Dorsolateral prefrontal cortex (tissue), 120 donors: ENCODE measurements at regions of chr2 and their contacts with region 1.

Region 1: GRCh38 chr2:231514103-231514950 is 15.9 kb downstream of the NMUR1 start:
- DNase-seq: peak; percentile 97 to 99 (median 98)
- H3K4me3 ChIP-seq: peak overlapping the region; percentile 55 to 98 (median 85)
- H3K27ac ChIP-seq: peak overlapping the region; percentile 63 to 97 (median 92)
- H3K27me3 ChIP-seq: no peaks in the 10 kb centered on the region
- CTCF ChIP-seq: peak in 23 of 56 donors; percentile 4 to 47 (median 31)

Region 2: GRCh38 chr2:231323316-231323715 is 191.0 kb before region 1 on chr2:
- intact Hi-C with region 1: no loop called
- DNase-seq: no peak
- H3K4me3 ChIP-seq: no peak overlapping the region
- H3K27ac ChIP-seq: no peak overlapping the region
- H3K27me3 ChIP-seq: no peaks in the 10 kb centered on the region
- CTCF ChIP-seq: no peak

Region 3: DNA sequence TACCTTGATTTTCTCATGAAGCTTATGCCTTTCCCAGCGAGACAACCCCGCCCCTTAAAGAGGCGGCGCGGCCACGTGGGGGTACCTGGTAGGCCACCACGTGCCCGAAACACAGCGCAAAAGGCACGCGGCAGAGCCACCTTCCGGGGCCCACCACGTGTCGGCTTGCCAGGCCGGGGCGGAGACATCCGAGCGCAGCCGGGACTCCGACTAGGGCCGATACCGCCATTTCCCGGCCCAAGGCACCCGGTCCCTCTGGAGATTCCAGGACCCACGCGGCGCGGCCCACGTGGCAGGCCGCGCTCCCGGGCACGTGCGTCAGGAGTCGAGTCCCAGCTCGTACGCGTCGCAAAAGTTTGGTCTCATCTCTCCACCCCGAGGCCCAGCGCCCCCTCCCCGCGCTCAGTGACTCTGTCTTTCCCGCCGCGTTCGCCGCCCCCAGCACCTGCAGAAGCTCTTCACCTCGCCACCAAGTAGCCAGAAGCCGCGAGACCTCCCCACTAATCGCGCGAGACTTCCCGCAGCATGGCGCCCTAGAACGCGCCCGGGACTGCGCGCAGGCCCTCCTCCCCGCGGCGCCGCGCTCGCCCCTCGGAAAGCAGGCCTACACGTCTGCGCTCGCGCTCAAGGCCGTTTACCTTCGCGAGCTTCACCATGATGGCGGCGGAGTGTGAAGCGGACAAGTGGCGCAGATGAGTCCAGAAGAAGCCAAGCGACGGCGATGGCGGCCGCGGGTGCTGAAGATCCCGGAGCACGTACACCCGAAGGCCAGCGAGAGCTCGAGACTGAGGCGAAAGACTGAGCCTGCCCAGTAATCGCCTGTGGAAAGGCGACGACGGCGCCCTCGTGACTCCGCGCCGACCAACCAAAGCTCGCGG is 50.4 kb before region 1 on chr2 and contains the start of gene NCL:
- intact Hi-C with region 1: loop called (anchors 2 kb)
- DNase-seq: peak in 5 of 10 donors; percentile 36 to 65 (median 46)
- H3K4me3 ChIP-seq: peak within 1 kb of the TSS; percentile 76 to 100 (median 94)
- H3K27ac ChIP-seq: peak within 1 kb of the TSS; percentile 70 to 99 (median 92)
- H3K27me3 ChIP-seq: no peaks in the 10 kb centered on the region
- CTCF ChIP-seq: peak in 16 of 56 donors; percentile 3 to 25 (median 8)
- total RNA-seq, gene NCL: 239 to 396 (median 335) TPM

Region 4: DNA sequence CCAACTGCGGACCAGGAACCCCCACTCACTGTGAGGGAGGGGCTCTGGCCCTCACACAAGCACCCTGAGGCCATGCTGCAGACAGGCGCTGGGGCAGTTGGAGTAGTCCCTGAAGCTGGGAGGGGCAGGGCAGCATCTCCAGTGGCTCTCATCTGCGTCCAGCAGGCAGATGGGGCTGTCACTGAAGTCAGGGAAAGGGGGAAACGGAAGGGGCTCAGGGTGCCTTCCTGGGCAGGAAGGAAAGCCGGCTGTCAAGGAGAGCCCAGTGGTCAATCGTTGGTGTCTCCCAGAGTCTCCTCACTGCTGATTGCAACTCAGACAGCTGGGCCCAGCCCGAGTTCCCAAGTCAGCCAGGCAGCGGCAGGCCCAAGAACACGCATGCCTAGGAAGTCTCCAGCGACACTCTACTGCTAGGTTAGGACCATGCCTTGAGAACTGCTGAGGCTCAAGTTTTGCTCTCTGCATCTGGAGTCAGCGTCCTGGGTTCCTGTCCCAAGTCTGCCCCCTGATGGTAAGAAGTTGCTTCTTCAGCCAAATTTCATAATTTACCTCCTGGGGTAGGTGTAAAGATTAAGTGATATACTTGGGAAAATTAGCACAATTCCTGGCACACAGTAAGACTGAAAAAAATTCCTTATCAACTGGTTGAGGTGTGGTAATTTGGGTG is 43.4 kb after region 1 on chr2:
- intact Hi-C with region 1: loop called (anchors 1 to 5 kb)
- DNase-seq: peak in 9 of 10 donors; percentile 27 to 60 (median 48)
- H3K4me3 ChIP-seq: peak overlapping the region in 1 of 59 donors; percentile 3
- H3K27ac ChIP-seq: peak overlapping the region in 3 of 59 donors; percentile 11 to 27 (median 17)
- H3K27me3 ChIP-seq: no peaks in the 10 kb centered on the region
- CTCF ChIP-seq: peak; percentile 61 to 90 (median 76)

Region 5: GRCh38 chr2:231563378-231563961 is 49.1 kb after region 1 on chr2:
- intact Hi-C with region 1: loop called (anchors 2 to 5 kb)
- DNase-seq: peak; percentile 41 to 79 (median 70)
- H3K4me3 ChIP-seq: no peak overlapping the region
- H3K27ac ChIP-seq: peak overlapping the region in 18 of 59 donors; percentile 2 to 70 (median 42)
- H3K27me3 ChIP-seq: no peaks in the 10 kb centered on the region
- CTCF ChIP-seq: peak; percentile 49 to 92 (median 81)

Region 6: GRCh38 chr2:231590619-231591018 is 76.3 kb after region 1 on chr2:
- intact Hi-C with region 1: no loop called
- DNase-seq: no peak
- H3K4me3 ChIP-seq: no peak overlapping the region
- H3K27ac ChIP-seq: peak overlapping the region in 2 of 59 donors; percentile 29 to 40
- H3K27me3 ChIP-seq: no peaks in the 10 kb centered on the region
- CTCF ChIP-seq: no peak

Region 7: GRCh38 chr2:231604685-231605606 is 90.6 kb after region 1 on chr2:
- intact Hi-C with region 1: loop called in 1 of 2 experiments (anchors 5 kb)
- DNase-seq: peak; percentile 99 to 100 (median 100)
- H3K4me3 ChIP-seq: peak overlapping the region; percentile 8 to 71 (median 59)
- H3K27ac ChIP-seq: peak overlapping the region; percentile 96 to 100 (median 100)
- H3K27me3 ChIP-seq: no peaks in the 10 kb centered on the region
- CTCF ChIP-seq: peak in 49 of 56 donors; percentile 16 to 72 (median 45)

Region 8: GRCh38 chr2:231674587-231675338 is 160.4 kb after region 1 on chr2:
- intact Hi-C with region 1: loop called in 1 of 2 experiments (anchors 10 kb)
- DNase-seq: peak in 9 of 10 donors; percentile 58 to 79 (median 69)
- H3K4me3 ChIP-seq: peak overlapping the region in 5 of 59 donors; percentile 8 to 12 (median 9)
- H3K27ac ChIP-seq: peak overlapping the region; percentile 67 to 100 (median 91)
- H3K27me3 ChIP-seq: no peaks in the 10 kb centered on the region
- CTCF ChIP-seq: peak; percentile 65 to 95 (median 86)